Dendritic cell treated with granulocyte-macrophage colony-stimulating factor and Interleukin-4, amounts not matched to agents 40 ng/mL and 50 ng/mL, for 4 days (primary cell): ENCODE measurements at regions of chr13 and their contacts with region 1.

Region 1: GRCh38 chr13:43878892-43879754 is at the start of gene CCDC122:
- H3K4me3 Mint-ChIP-seq: peak within 1 kb of the TSS; percentile 98
- H3K27ac Mint-ChIP-seq: peak within 1 kb of the TSS; percentile 100
- H3K4me1 Mint-ChIP-seq: peaks cover 43% of the 10 kb centered on the region
- H3K27me3 Mint-ChIP-seq: peaks cover 7% of the 10 kb centered on the region

Region 2: GRCh38 chr13:42594970-42595571 is 1284.1 kb before region 1 on chr13:
- intact Hi-C with region 1: loop called (anchors 10 kb)
- H3K4me3 Mint-ChIP-seq: no peak overlapping the region
- H3K27ac Mint-ChIP-seq: no peak overlapping the region
- H3K4me1 Mint-ChIP-seq: no peaks in the 10 kb centered on the region
- H3K27me3 Mint-ChIP-seq: peaks cover 13% of the 10 kb centered on the region

Region 3: GRCh38 chr13:43085545-43085944 is 793.6 kb before region 1 on chr13:
- intact Hi-C with region 1: loop called (anchors 2 kb)
- H3K4me3 Mint-ChIP-seq: no peak overlapping the region
- H3K27ac Mint-ChIP-seq: no peak overlapping the region
- H3K4me1 Mint-ChIP-seq: peaks cover 16% of the 10 kb centered on the region
- H3K27me3 Mint-ChIP-seq: no peaks in the 10 kb centered on the region

Region 4: GRCh38 chr13:43374621-43375020 is 504.5 kb before region 1 on chr13:
- intact Hi-C with region 1: loop called (anchors 10 kb)
- H3K4me3 Mint-ChIP-seq: no peak overlapping the region
- H3K27ac Mint-ChIP-seq: no peak overlapping the region
- H3K4me1 Mint-ChIP-seq: peaks cover 61% of the 10 kb centered on the region
- H3K27me3 Mint-ChIP-seq: peaks cover 53% of the 10 kb centered on the region

Region 5: DNA sequence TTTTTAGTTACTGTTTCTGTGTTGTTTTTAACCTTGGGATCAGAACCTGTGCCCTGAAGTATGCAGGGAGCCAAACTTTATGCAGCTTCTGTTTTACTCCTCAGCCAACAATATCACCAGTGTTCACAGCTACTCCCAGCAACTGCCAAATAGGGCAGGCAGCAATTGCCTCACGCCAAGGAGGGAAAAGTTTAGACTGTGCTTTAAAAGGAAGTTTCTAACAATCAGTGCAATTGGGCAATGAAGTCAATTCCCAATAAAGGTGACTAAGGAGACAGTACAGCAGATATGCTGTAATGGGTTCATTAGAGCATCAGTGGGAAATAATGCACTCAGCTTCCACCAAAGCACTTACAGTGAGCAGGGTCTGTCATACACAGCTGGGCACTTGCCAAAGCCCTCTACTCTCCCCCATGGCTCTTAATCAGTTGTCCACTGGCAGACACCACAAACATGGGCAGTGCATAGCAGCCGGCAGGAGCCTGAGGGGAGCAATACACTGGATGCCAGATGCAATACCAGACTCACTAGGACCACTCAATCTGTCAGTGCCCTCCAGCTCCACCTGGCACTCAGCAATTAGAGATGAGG is 111.7 kb before region 1 on chr13:
- intact Hi-C with region 1: no loop called
- H3K4me3 Mint-ChIP-seq: no peak overlapping the region
- H3K27ac Mint-ChIP-seq: no peak overlapping the region
- H3K4me1 Mint-ChIP-seq: no peaks in the 10 kb centered on the region
- H3K27me3 Mint-ChIP-seq: no peaks in the 10 kb centered on the region

Region 6: GRCh38 chr13:43804461-43805070 is 74.6 kb before region 1 on chr13:
- intact Hi-C with region 1: loop called (anchors 5 kb)
- H3K4me3 Mint-ChIP-seq: no peak overlapping the region
- H3K27ac Mint-ChIP-seq: no peak overlapping the region
- H3K4me1 Mint-ChIP-seq: no peaks in the 10 kb centered on the region
- H3K27me3 Mint-ChIP-seq: no peaks in the 10 kb centered on the region

Region 7: DNA sequence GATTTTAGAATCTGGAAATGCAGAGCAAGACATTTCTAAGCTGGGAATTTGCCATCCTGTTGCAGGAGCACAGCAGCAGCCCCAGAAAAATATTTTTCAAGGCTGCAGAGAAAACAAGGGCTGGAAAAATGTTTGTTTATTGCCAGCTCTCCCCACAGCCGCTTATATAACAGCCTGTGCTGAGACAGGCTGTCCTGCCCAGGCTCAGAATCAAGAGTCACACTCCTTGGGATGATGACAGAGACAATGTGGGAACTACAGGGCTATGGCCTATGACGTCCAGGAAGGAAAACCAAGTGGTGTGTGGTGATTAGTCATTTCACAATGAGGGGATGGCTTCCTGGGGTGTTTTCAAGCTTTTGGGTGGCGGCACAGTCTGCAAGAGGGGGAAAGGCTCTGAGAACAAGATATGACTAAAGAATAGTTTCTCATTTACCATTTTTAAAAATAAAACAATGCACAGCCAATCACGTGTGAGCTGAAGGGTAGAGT is 358.2 kb after region 1 on chr13:
- intact Hi-C with region 1: no loop called
- H3K4me3 Mint-ChIP-seq: no peak overlapping the region
- H3K27ac Mint-ChIP-seq: no peak overlapping the region
- H3K4me1 Mint-ChIP-seq: peaks cover 33% of the 10 kb centered on the region
- H3K27me3 Mint-ChIP-seq: peaks cover 56% of the 10 kb centered on the region